ENCODE measurements at regions of chr19 and their contacts with region 1.

Region 1: GRCh38 chr19:8321060-8321985 is at the starts of genes NDUFA7 and RPS28:
- DNase-seq: peak; percentile 94 to 99 (median 97)
- ATAC-seq: peak; percentile 93
- H3K4me3 ChIP-seq: peak within 1 kb of the TSS; percentile 81 to 98
- H3K4me3 Mint-ChIP-seq: peak within 1 kb of the TSS; percentile 96
- H3K27ac ChIP-seq: peak within 1 kb of the TSS; percentile 90 to 96
- H3K27ac Mint-ChIP-seq: peak within 1 kb of the TSS; percentile 97
- H3K4me1 ChIP-seq: peaks cover 26% of the 10 kb centered on the region
- H3K4me1 Mint-ChIP-seq: peaks cover 37% of the 10 kb centered on the region
- H3K27me3 ChIP-seq: no peaks in the 10 kb centered on the region
- H3K27me3 Mint-ChIP-seq: no peaks in the 10 kb centered on the region
- CTCF ChIP-seq: no peak
- total RNA-seq, gene NDUFA7: 19.8 to 28.9 TPM
- total RNA-seq, gene RPS28: 3,224 to 3,257 TPM

Region 2: GRCh38 chr19:8158411-8159074 is 162.8 kb before region 1 on chr19:
- CTCF ChIA-PET with region 1: no interaction called
- POLR2A ChIA-PET with region 1: no interaction called
- intact Hi-C with region 1: loop called in 1 of 2 experiments (anchors 1 kb)
- DNase-seq: peak in 7 of 9 experiments; percentile 21 to 84 (median 42)
- ATAC-seq: peak; percentile 40
- H3K4me3 ChIP-seq: no peak overlapping the region
- H3K4me3 Mint-ChIP-seq: no peak overlapping the region
- H3K27ac ChIP-seq: no peak overlapping the region
- H3K27ac Mint-ChIP-seq: no peak overlapping the region
- H3K4me1 ChIP-seq: no peaks in the 10 kb centered on the region
- H3K4me1 Mint-ChIP-seq: no peaks in the 10 kb centered on the region
- H3K27me3 ChIP-seq: peaks cover 0 to 3% of the 10 kb centered on the region in 2 experiments
- H3K27me3 Mint-ChIP-seq: peaks cover 21% of the 10 kb centered on the region
- CTCF ChIP-seq: peak; percentile 62

Region 3: GRCh38 chr19:8307965-8308866 is 13.1 kb before region 1 on chr19 and contains the start of gene CD320:
- CTCF ChIA-PET with region 1: interaction called, 19 read pairs
- POLR2A ChIA-PET with region 1: interaction called, 6 read pairs
- intact Hi-C with region 1: loop called (anchors 1 kb)
- DNase-seq: peak; percentile 71 to 92 (median 86)
- ATAC-seq: peak; percentile 93
- H3K4me3 ChIP-seq: peak within 1 kb of the TSS; percentile 63 to 64
- H3K4me3 Mint-ChIP-seq: peak within 1 kb of the TSS; percentile 91
- H3K27ac ChIP-seq: peak within 1 kb of the TSS; percentile 64 to 71
- H3K27ac Mint-ChIP-seq: peak within 1 kb of the TSS; percentile 94
- H3K4me1 ChIP-seq: peaks cover 29% of the 10 kb centered on the region
- H3K4me1 Mint-ChIP-seq: peaks cover 31% of the 10 kb centered on the region
- H3K27me3 ChIP-seq: no peaks in the 10 kb centered on the region
- H3K27me3 Mint-ChIP-seq: no peaks in the 10 kb centered on the region
- CTCF ChIP-seq: no peak
- total RNA-seq, gene CD320: 15.7 to 19.1 TPM

Region 4: GRCh38 chr19:8361921-8362793 is 40.8 kb after region 1 on chr19:
- CTCF ChIA-PET with region 1: no interaction called
- POLR2A ChIA-PET with region 1: no interaction called
- intact Hi-C with region 1: no loop called
- DNase-seq: no peak
- ATAC-seq: no peak
- H3K4me3 ChIP-seq: no peak overlapping the region
- H3K4me3 Mint-ChIP-seq: no peak overlapping the region
- H3K27ac ChIP-seq: no peak overlapping the region
- H3K27ac Mint-ChIP-seq: no peak overlapping the region
- H3K4me1 ChIP-seq: peaks cover 13% of the 10 kb centered on the region
- H3K4me1 Mint-ChIP-seq: peaks cover 12% of the 10 kb centered on the region
- H3K27me3 ChIP-seq: peaks cover 0 to 19% of the 10 kb centered on the region in 2 experiments
- H3K27me3 Mint-ChIP-seq: peaks cover 40% of the 10 kb centered on the region
- CTCF ChIP-seq: no peak

Region 5: DNA sequence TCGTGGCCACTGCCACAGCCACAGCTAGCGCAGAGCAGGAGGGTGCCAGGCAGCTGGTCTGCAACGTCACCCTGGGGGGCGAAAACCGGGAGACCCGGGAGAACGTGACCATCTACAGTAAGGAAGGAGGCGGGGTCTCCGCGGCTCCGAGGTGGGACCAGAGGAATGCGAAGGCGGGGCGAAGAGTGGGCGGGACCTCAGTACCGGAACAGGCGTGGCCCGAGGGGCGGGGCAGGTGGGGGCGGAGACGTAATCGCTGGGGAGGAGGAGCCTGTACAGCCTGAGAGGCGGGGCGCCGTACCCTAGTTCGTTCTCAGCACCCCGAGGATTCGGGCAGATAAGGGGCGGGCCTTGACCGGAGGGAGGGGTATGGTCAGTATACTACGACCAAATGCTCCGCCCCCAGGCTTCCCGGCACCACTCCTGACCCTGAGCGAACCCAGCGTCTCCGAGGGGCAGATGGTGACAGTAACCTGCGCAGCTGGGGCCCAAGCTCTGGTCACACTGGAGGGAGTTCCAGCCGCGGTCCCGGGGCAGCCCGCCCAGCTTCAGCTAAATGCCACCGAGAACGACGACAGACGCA is 1971.0 kb after region 1 on chr19:
- CTCF ChIA-PET with region 1: no interaction called
- POLR2A ChIA-PET with region 1: no interaction called
- intact Hi-C with region 1: no loop called
- DNase-seq: peak; percentile 41 to 79 (median 69)
- ATAC-seq: peak; percentile 45
- H3K4me3 ChIP-seq: peak overlapping the region; percentile 47 to 51
- H3K4me3 Mint-ChIP-seq: peak overlapping the region; percentile 80
- H3K27ac ChIP-seq: no peak overlapping the region
- H3K27ac Mint-ChIP-seq: no peak overlapping the region
- H3K4me1 ChIP-seq: peaks cover 79% of the 10 kb centered on the region
- H3K4me1 Mint-ChIP-seq: peaks cover 70% of the 10 kb centered on the region
- H3K27me3 ChIP-seq: peaks cover 58 to 78% of the 10 kb centered on the region in 2 experiments
- H3K27me3 Mint-ChIP-seq: peaks cover 59% of the 10 kb centered on the region
- CTCF ChIP-seq: no peak

Measured in CD8-positive, alpha-beta T cell (primary cell).